PC-9 (cell line): ENCODE measurements at regions of chr3 and their contacts with region 1.

Region 1: GRCh38 chr3:129942296-129942695 is 32.2 kb upstream of the TRH start:
- DNase-seq: peak in 1 of 2 experiments; percentile 70
- H3K4me3 ChIP-seq: no peak overlapping the region
- H3K27ac ChIP-seq: no peak overlapping the region
- H3K4me1 ChIP-seq: no peaks in the 10 kb centered on the region
- H3K27me3 ChIP-seq: peaks cover 15% of the 10 kb centered on the region; the same call in 1 of the 2 replicates
- CTCF ChIP-seq: peak; percentile 88

Region 2: GRCh38 chr3:129718201-129718600 is 224.1 kb before region 1 on chr3:
- CTCF ChIA-PET with region 1: no interaction called
- POLR2A ChIA-PET with region 1: no interaction called
- intact Hi-C with region 1: no loop called
- DNase-seq: no peak
- H3K4me3 ChIP-seq: no peak overlapping the region
- H3K27ac ChIP-seq: no peak overlapping the region
- H3K4me1 ChIP-seq: peaks cover 10% of the 10 kb centered on the region
- H3K27me3 ChIP-seq: no peaks in the 10 kb centered on the region
- CTCF ChIP-seq: no peak

Region 3: GRCh38 chr3:129845956-129846355 is 96.3 kb before region 1 on chr3:
- CTCF ChIA-PET with region 1: no interaction called
- POLR2A ChIA-PET with region 1: no interaction called
- intact Hi-C with region 1: no loop called
- DNase-seq: peak in 1 of 2 experiments; percentile 16
- H3K4me3 ChIP-seq: no peak overlapping the region
- H3K27ac ChIP-seq: no peak overlapping the region
- H3K4me1 ChIP-seq: no peaks in the 10 kb centered on the region
- H3K27me3 ChIP-seq: no peaks in the 10 kb centered on the region
- CTCF ChIP-seq: no peak

Region 4: DNA sequence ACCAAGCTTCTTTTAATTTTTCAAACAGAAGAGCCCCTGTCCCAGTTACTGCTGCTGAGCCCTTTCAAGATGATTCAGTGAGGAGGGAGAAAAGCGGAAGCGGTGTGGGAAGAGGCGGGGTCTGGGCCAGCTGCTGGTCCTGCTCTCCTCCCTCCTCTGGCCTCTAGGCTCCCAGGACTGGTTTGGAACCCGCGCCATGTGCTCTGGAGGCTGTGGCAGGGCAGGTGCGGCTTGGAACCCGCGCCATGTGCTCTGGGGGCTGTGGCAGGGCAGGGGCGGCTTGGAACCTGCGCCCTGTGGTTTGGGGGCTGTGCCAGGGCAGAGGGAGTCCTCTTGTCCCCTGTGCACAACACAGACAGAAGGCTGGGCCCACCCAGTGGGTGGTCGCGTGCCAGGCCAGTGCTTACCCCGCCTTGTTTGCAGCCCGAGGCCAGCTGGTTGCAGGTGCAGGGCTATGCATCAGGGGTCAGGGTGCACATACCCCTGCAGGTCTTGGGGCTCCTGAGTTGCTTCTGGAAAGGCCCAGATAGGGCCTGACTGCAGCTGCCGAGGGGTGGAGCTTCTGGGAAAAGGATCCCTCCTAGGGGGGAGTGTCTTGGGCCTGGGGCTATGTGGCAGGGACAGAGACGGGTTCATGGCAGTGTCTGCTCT is 151.6 kb after region 1 on chr3:
- CTCF ChIA-PET with region 1: interaction called, 13 read pairs
- POLR2A ChIA-PET with region 1: interaction called, 7 read pairs
- intact Hi-C with region 1: loop called (anchors 2 kb)
- DNase-seq: peak; percentile 62 to 66
- H3K4me3 ChIP-seq: peak overlapping the region; percentile 46; the same call in 1 of the 2 replicates
- H3K27ac ChIP-seq: peak overlapping the region; percentile 77
- H3K4me1 ChIP-seq: peaks cover 26% of the 10 kb centered on the region
- H3K27me3 ChIP-seq: no peaks in the 10 kb centered on the region
- CTCF ChIP-seq: no peak

Region 5: GRCh38 chr3:130111185-130111864 is 169.0 kb after region 1 on chr3:
- CTCF ChIA-PET with region 1: interaction called, 4 read pairs
- POLR2A ChIA-PET with region 1: no interaction called
- intact Hi-C with region 1: loop called (anchors 1 kb)
- DNase-seq: peak; percentile 89 to 99
- H3K4me3 ChIP-seq: peak overlapping the region; percentile 88
- H3K27ac ChIP-seq: peak overlapping the region; percentile 78
- H3K4me1 ChIP-seq: peaks cover 23% of the 10 kb centered on the region
- H3K27me3 ChIP-seq: no peaks in the 10 kb centered on the region
- CTCF ChIP-seq: no peak

Region 6: GRCh38 chr3:130242850-130243569 is 300.7 kb after region 1 on chr3:
- CTCF ChIA-PET with region 1: no interaction called
- POLR2A ChIA-PET with region 1: no interaction called
- intact Hi-C with region 1: loop called (anchors 10 kb)
- DNase-seq: peak in 1 of 2 experiments; percentile 8
- H3K4me3 ChIP-seq: no peak overlapping the region
- H3K27ac ChIP-seq: no peak overlapping the region
- H3K4me1 ChIP-seq: no peaks in the 10 kb centered on the region
- H3K27me3 ChIP-seq: no peaks in the 10 kb centered on the region
- CTCF ChIP-seq: peak; percentile 36; the same call in 1 of the 2 replicates

Region 7: GRCh38 chr3:130539005-130539404 is 596.7 kb after region 1 on chr3:
- CTCF ChIA-PET with region 1: no interaction called
- POLR2A ChIA-PET with region 1: no interaction called
- intact Hi-C with region 1: loop called (anchors 5 kb)
- DNase-seq: peak in 1 of 2 experiments; percentile 43
- H3K4me3 ChIP-seq: no peak overlapping the region
- H3K27ac ChIP-seq: no peak overlapping the region
- H3K4me1 ChIP-seq: no peaks in the 10 kb centered on the region
- H3K27me3 ChIP-seq: peaks cover 2% of the 10 kb centered on the region; the same call in 1 of the 2 replicates
- CTCF ChIP-seq: peak; percentile 81